Ovary (tissue), 10 donors: ENCODE measurements at regions of chr12 and their contacts with region 1.

Region 1: DNA sequence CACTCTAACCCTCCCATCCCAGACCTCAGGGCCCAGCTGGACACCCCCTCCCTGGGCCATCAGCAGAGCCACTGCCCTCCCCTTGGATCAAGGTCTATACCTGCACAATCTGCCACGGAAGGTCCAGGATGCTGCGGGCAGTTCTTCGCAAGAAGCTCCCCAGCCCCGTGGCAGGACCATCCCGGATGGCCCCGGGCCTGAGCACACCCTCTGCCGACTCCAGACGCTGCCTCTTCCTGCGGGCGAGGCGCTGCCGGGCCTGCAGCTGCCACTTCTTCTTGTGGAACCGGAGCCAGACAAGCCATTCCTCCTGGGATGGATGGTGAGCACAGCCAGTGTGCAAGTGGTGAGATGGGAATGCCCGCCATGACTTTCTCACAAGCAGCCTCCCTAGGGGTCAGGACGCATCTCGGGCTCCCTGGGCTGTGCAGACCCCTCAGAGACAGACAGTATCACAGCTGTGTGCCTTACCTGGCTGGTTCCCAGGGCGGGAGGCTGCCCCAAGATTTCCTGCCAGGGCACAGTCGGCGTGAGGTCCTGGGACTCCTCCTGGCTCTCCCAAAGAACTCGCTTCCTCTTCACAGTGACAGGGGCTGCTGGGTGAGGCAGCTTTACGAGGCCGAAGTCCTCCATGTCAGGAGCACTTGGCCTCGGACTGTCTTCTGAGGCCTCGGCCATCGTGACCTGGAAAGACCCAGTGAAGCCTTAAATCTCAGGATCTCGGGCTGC is 30.8 kb downstream of the P2RX2 start:
- DNase-seq: no peak
- H3K4me3 ChIP-seq: no peak overlapping the region
- H3K27ac ChIP-seq: no peak overlapping the region
- H3K4me1 ChIP-seq: no peaks in the 10 kb centered on the region
- H3K27me3 ChIP-seq: no peaks in the 10 kb centered on the region
- CTCF ChIP-seq: no peak
- EP300 ChIP-seq: no peak
- POLR2A ChIP-seq: no peak

Region 2: GRCh38 chr12:131710464-131711457 is 938.6 kb before region 1 on chr12 and contains the start of gene SFSWAP:
- intact Hi-C with region 1: loop called in 1 of 4 experiments (anchors 10 kb)
- DNase-seq: peak; percentile 67 to 84 (median 70)
- H3K4me3 ChIP-seq: peak within 1 kb of the TSS; percentile 64
- H3K27ac ChIP-seq: peak within 1 kb of the TSS; percentile 84 to 86
- H3K4me1 ChIP-seq: peaks cover 12% of the 10 kb centered on the region
- H3K27me3 ChIP-seq: no peaks in the 10 kb centered on the region
- CTCF ChIP-seq: peak in 2 of 3 donors; percentile 25 to 26
- EP300 ChIP-seq: no peak
- POLR2A ChIP-seq: peak; percentile 54
- total RNA-seq, gene SFSWAP: 32.6 to 54.4 (median 49.4) TPM